Psoas muscle (tissue), 8 donors: ENCODE measurements at regions of chr6 and their contacts with region 1.

Region 1: GRCh38 chr6:7219310-7219709 is 93.7 kb downstream of the SSR1 start:
- DNase-seq: peak in 1 of 2 donors; percentile 72
- ATAC-seq: peak in 3 of 4 donors; percentile 21 to 45 (median 23)
- H3K4me3 ChIP-seq: no peak overlapping the region
- H3K27ac ChIP-seq: peak overlapping the region; percentile 95
- H3K4me1 ChIP-seq: peaks cover 56% of the 10 kb centered on the region
- H3K27me3 ChIP-seq: no peaks in the 10 kb centered on the region
- CTCF ChIP-seq: no peak

Region 2: DNA sequence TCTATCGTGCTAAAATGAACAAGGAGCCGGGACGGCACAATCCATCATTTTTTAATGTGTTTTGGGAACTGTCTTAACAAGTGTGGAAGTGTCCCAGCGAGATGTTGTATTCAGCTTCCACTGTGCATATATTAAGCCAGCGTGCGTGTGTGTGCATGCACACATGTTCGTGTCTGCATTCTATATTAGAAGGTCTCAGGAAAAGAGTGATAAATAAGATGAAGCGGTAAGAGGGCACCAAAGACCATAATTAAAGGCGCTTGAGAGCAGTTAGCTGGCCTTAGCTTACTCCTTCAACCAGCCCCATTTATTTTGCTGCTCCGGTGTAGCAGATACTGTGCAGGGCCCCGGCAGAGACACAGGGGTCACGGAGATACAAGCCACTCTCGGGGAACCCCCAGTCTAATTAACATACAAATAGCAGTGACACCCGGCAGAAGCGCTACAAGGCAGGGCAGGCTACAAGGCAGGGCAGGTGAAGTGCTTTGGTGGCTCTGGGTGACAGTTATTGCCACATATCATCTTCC is 318.0 kb before region 1 on chr6:
- intact Hi-C with region 1: loop called in 1 of 2 experiments (anchors 5 kb)
- DNase-seq: no peak
- ATAC-seq: peak; percentile 64 to 75 (median 70)
- H3K4me3 ChIP-seq: peak overlapping the region; percentile 40
- H3K27ac ChIP-seq: peak overlapping the region; percentile 87
- H3K4me1 ChIP-seq: peaks cover 7% of the 10 kb centered on the region
- H3K27me3 ChIP-seq: no peaks in the 10 kb centered on the region
- CTCF ChIP-seq: no peak

Region 3: GRCh38 chr6:7051233-7052114 is 167.8 kb before region 1 on chr6:
- intact Hi-C with region 1: loop called in 1 of 2 experiments (anchors 5 kb)
- DNase-seq: peak; percentile 61 to 81
- ATAC-seq: peak; percentile 76 to 79 (median 78)
- H3K4me3 ChIP-seq: peak overlapping the region; percentile 70
- H3K27ac ChIP-seq: peak overlapping the region; percentile 96
- H3K4me1 ChIP-seq: peaks cover 3% of the 10 kb centered on the region
- H3K27me3 ChIP-seq: no peaks in the 10 kb centered on the region
- CTCF ChIP-seq: no peak

Region 4: GRCh38 chr6:7112741-7113313 is 106.5 kb before region 1 on chr6:
- intact Hi-C with region 1: loop called in 1 of 2 experiments (anchors 10 kb)
- DNase-seq: no peak
- ATAC-seq: peak in 1 of 4 donors; percentile 31
- H3K4me3 ChIP-seq: peak overlapping the region; percentile 24
- H3K27ac ChIP-seq: peak overlapping the region; percentile 81
- H3K4me1 ChIP-seq: peaks cover 57% of the 10 kb centered on the region
- H3K27me3 ChIP-seq: no peaks in the 10 kb centered on the region
- CTCF ChIP-seq: no peak

Region 5: GRCh38 chr6:7137335-7138045 is 81.8 kb before region 1 on chr6:
- intact Hi-C with region 1: loop called in 1 of 2 experiments (anchors 5 kb)
- DNase-seq: peak; percentile 59 to 76
- ATAC-seq: peak; percentile 39 to 55 (median 48)
- H3K4me3 ChIP-seq: peak overlapping the region; percentile 50
- H3K27ac ChIP-seq: peak overlapping the region; percentile 99
- H3K4me1 ChIP-seq: peaks cover 86% of the 10 kb centered on the region
- H3K27me3 ChIP-seq: no peaks in the 10 kb centered on the region
- CTCF ChIP-seq: no peak

Region 6: DNA sequence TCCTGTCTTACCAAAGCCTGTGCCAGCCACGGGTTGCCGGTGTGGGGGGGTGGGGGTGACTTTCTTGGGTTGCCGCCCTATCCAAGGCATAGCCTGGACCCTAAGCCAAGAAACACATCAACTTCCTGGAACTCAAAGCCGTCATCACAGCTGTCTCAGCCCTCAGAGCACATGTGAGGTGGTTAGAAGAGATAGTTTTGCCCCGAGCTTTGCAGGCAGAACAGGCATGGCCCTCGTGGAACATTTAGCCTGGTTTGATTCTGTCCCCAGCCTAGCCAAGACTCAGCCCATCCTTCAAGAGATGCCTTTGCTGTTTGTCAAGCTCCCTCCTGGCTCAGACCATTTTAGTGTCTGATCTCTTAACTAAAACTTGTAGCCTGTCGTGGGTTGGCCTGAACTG is 46.7 kb before region 1 on chr6:
- intact Hi-C with region 1: loop called (anchors 5 kb)
- DNase-seq: peak; percentile 42 to 64
- ATAC-seq: peak; percentile 71 to 84 (median 80)
- H3K4me3 ChIP-seq: no peak overlapping the region
- H3K27ac ChIP-seq: peak overlapping the region; percentile 79
- H3K4me1 ChIP-seq: peaks cover 74% of the 10 kb centered on the region
- H3K27me3 ChIP-seq: no peaks in the 10 kb centered on the region
- CTCF ChIP-seq: no peak